GM10248 (cell line): ENCODE measurements at regions of chr13 and their contacts with region 1.

Region 1: DNA sequence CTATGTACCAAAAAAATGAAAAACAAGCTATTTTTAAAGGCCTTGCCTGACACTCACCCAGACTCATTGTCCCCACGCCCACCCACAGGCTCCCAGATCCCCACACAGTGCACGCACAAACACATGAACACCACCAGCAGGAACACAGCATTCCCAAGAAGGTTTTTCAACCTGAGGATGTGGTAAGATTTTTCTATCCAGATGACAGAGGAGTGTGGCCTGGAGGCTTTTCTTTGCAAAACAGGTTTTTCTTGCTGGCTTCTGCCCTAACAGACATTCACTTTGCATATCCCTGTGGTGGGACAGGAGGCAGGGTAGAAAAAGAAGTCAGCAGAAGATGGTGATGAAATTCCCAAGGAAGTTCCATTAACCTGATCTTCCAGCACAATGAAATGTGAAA is 97.8 kb downstream of the KLF12 start:
- DNase-seq: no peak
- CTCF ChIP-seq: no peak

Region 2: GRCh38 chr13:74024314-74024713 is 12.1 kb before region 1 on chr13:
- CTCF ChIA-PET with region 1: interaction called, 10 read pairs
- POLR2A ChIA-PET with region 1: no interaction called
- DNase-seq: no peak
- CTCF ChIP-seq: no peak

Region 3: DNA sequence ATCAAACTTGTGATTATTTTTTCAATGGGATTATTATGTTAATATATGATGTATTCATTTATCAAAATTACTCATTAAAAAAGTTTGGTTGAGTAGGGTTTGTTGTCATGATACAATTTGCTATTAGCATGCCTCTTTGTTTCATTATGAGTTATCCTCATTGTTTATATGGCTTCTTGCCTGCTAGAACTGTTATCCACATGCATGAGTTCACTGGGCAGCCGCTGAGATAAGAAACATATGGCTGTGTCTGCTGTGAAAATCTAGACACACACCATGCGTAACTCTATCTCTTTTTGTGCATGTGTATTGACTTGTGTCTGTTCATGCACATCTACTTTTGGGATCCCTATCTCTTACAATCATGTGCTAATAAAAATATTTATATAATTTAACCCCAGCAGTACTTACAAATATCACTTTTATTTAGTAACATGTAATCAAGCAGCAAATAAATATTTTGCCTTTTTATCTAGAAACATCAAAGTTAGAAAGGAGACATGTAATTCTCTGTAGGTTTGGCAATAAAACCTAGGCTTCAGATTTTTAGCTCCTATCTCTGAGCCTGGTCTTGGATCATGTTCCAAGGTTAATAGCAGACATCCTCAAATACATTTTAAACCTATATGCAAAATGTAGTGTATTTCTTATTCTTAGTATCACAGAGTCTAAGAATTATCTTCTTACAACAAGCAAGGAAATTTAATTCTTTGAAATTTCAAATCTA is 109.0 kb after region 1 on chr13:
- CTCF ChIA-PET with region 1: no interaction called
- POLR2A ChIA-PET with region 1: no interaction called
- DNase-seq: no peak
- CTCF ChIP-seq: no peak